CD4-positive, alpha-beta T cell (primary cell): ENCODE measurements at regions of chr15 and their contacts with region 1.

Region 1: DNA sequence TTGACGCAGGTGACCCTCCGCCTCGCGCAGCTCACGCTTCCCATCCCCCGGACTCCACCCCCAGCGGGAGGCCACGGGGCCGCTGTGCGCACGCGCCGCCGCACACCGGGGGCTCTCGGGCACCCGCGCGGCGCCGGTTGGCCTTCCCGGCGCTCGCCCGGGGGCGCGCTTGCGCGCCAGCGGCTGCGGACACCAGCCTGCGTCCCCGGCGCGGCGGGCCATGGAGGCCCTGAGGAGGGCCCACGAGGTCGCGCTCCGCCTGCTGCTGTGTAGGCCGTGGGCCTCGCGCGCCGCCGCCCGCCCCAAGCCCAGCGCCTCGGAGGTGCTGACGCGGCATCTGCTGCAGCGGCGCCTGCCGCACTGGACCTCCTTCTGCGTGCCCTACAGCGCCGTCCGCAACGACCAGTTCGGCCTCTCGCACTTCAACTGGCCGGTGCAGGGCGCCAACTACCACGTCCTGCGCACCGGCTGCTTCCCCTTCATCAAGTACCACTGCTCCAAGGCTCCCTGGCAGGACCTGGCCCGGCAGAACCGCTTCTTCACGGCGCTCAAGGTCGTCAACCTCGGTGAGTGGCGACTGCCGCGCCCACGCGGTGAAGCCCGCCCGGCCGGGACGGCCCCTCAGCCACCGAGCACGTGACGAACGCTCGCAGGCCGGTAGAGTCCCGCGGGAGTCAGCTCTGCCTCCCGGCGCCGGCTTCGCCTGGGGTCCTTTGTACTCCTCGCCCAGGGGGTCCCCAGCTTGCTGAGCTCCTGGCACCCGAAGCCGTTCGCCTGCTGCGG is at the start of gene C15orf61:
- DNase-seq: peak; percentile 70 to 95 (median 82)
- ATAC-seq: peak; percentile 80
- H3K4me3 ChIP-seq: peak within 1 kb of the TSS; percentile 78
- H3K4me3 Mint-ChIP-seq: peak within 1 kb of the TSS; percentile 95
- H3K27ac ChIP-seq: peak within 1 kb of the TSS; percentile 80 to 84
- H3K27ac Mint-ChIP-seq: peak within 1 kb of the TSS; percentile 91
- H3K4me1 ChIP-seq: peaks cover 13% of the 10 kb centered on the region
- H3K4me1 Mint-ChIP-seq: peaks cover 30% of the 10 kb centered on the region
- H3K27me3 ChIP-seq: no peaks in the 10 kb centered on the region
- H3K27me3 Mint-ChIP-seq: no peaks in the 10 kb centered on the region
- CTCF ChIP-seq: no peak
- total RNA-seq, gene C15orf61: 11.3 to 12.0 TPM

Region 2: DNA sequence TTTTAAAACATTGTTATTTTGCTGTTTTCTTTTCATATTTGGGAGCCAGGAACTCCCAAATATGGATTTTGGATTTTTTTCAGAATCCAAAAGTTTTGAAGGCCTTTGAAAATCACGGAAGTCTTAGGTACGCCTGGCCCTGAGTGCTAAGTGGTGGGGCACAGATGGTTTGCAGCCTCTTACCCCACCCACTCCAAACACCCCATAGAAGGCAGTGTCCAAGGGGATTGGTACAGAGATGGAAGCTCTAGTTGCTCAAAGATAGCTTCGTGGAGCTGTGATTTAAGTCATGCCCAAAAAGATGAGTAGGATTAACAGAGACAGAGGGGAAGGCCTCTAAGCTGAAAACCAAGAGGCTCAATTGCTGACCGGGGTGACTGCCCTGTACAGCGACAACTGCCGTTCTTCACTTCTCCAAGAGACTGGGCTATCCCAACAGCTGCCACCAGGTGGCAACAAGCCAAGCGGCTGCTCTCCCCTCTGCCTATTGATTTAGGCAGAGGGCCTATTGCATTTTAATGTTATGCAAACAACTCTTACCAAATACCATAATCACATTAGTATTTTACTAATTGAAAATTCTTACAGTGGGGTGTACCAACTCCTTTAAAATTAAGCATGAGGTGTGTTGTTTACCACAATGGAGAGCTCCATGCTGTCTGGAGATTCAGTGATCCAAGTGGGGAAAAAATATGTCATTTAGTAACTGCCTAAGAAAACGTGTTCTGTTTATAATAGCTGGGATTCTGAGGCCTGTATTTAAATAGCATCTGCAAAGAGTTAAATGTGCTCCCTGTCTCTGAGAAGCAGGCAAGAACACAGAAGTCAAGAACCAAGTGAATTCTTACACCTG is 64.3 kb before region 1 on chr15:
- CTCF ChIA-PET with region 1: interaction called, 3 read pairs
- POLR2A ChIA-PET with region 1: interaction called, 3 read pairs
- intact Hi-C with region 1: loop called in 1 of 2 experiments (anchors 5 kb)
- DNase-seq: peak; percentile 70 to 90 (median 81)
- ATAC-seq: peak; percentile 91
- H3K4me3 ChIP-seq: no peak overlapping the region
- H3K4me3 Mint-ChIP-seq: no peak overlapping the region
- H3K27ac ChIP-seq: no peak overlapping the region
- H3K27ac Mint-ChIP-seq: no peak overlapping the region
- H3K4me1 ChIP-seq: peaks cover 4% of the 10 kb centered on the region
- H3K4me1 Mint-ChIP-seq: no peaks in the 10 kb centered on the region
- H3K27me3 ChIP-seq: peaks cover 0 to 6% of the 10 kb centered on the region in 2 experiments
- H3K27me3 Mint-ChIP-seq: peaks cover 18% of the 10 kb centered on the region
- CTCF ChIP-seq: peak; percentile 82

Region 3: DNA sequence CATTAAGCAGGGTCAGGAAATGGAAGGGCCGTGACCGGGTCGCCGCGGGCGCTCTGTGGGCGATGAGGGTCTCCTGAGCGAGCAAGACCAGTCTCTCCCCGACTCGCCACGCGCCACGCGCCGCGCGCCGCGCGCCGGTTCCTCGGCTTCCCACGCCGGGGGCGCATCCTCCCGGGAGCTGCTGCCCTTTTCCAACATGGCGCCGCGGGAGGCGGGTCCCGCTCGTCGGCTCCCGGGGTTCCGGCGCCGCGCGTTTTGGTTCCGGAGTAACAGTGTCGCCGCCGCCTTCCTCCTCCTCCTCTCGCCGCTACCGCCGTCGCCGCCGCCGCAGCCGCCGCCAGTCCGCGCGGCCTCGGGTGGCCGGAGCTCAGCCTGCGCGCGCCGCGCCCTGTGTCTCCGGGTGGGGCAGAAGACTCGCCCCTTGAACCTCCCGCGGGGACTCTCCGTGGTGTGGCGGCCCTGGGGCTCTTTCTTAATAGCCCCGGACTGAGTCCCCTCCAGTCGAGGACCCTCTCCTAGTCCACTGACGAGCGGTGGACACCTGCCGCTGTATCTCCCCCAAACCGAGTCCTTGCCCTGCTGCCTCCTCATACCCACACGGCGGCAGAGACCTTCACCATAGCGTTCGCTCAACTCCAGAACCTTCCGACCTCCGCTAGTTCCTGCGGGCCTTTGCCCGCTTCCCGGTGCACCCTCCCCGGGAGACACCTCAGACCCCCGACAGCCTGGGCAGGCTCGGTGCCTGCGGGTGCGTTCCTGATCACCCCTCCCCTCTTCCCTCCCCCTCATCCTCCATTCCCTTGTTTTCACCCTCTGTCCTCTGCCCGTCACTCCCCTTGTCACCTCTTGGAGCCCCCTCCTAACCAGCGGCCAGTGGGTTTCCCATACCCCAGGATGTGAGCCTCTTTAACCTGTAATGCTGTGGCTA is 21.5 kb after region 1 on chr15 and contains the start of gene MAP2K5:
- CTCF ChIA-PET with region 1: interaction called, 5 read pairs
- POLR2A ChIA-PET with region 1: interaction called, 72 read pairs
- intact Hi-C with region 1: loop called (anchors 1 kb)
- DNase-seq: peak; percentile 73 to 91 (median 81)
- ATAC-seq: peak; percentile 76
- H3K4me3 ChIP-seq: peak within 1 kb of the TSS; percentile 77
- H3K4me3 Mint-ChIP-seq: peak within 1 kb of the TSS; percentile 93
- H3K27ac ChIP-seq: peak within 1 kb of the TSS; percentile 74 to 78
- H3K27ac Mint-ChIP-seq: peak within 1 kb of the TSS; percentile 99
- H3K4me1 ChIP-seq: peaks cover 14% of the 10 kb centered on the region
- H3K4me1 Mint-ChIP-seq: peaks cover 58% of the 10 kb centered on the region
- H3K27me3 ChIP-seq: no peaks in the 10 kb centered on the region
- H3K27me3 Mint-ChIP-seq: no peaks in the 10 kb centered on the region
- CTCF ChIP-seq: no peak
- total RNA-seq, gene MAP2K5: 22.2 to 27.9 TPM

Region 4: GRCh38 chr15:68229386-68230156 is 708.4 kb after region 1 on chr15 and contains the start of gene CLN6:
- CTCF ChIA-PET with region 1: no interaction called
- POLR2A ChIA-PET with region 1: no interaction called
- intact Hi-C with region 1: loop called in 1 of 2 experiments (anchors 10 kb)
- DNase-seq: peak; percentile 57 to 93 (median 75)
- ATAC-seq: peak; percentile 82
- H3K4me3 ChIP-seq: peak within 1 kb of the TSS; percentile 88
- H3K4me3 Mint-ChIP-seq: peak within 1 kb of the TSS; percentile 92
- H3K27ac ChIP-seq: peak within 1 kb of the TSS in 1 of 2 donors; percentile 34
- H3K27ac Mint-ChIP-seq: peak within 1 kb of the TSS; percentile 73
- H3K4me1 ChIP-seq: peaks cover 29% of the 10 kb centered on the region
- H3K4me1 Mint-ChIP-seq: peaks cover 28% of the 10 kb centered on the region
- H3K27me3 ChIP-seq: no peaks in the 10 kb centered on the region
- H3K27me3 Mint-ChIP-seq: no peaks in the 10 kb centered on the region
- CTCF ChIP-seq: no peak
- total RNA-seq, gene CLN6: 8.0 to 8.1 TPM